ENCODE measurements at regions of chr19 and their contacts with region 1.

Region 1: DNA sequence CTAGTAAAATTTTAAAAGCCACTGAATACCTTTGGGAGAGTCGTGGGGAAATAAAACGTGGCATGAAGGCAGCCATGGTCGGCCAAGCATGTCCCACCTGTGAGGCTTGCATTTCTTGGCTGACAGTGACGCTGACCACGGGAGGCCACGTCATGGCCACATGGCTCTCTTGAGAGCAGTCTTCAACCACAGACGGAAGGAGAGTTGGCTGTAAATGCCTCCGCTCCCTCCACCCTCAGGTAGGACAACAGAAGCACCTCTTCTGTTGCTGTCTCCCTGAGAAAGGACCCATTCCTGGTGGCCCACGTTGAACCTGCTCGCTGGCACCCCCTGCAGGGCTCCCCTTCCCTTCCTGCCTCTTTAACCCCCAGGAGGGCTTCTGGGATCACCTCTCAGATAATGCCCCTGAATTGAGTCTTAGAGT is 10.6 kb upstream of the LRRC25 start:
- DNase-seq: peak; percentile 82
- H3K4me3 ChIP-seq: no peak overlapping the region
- H3K27ac ChIP-seq: no peak overlapping the region
- H3K4me1 ChIP-seq: no peaks in the 10 kb centered on the region
- H3K27me3 ChIP-seq: no peaks in the 10 kb centered on the region
- CTCF ChIP-seq: peak; percentile 61

Region 2: DNA sequence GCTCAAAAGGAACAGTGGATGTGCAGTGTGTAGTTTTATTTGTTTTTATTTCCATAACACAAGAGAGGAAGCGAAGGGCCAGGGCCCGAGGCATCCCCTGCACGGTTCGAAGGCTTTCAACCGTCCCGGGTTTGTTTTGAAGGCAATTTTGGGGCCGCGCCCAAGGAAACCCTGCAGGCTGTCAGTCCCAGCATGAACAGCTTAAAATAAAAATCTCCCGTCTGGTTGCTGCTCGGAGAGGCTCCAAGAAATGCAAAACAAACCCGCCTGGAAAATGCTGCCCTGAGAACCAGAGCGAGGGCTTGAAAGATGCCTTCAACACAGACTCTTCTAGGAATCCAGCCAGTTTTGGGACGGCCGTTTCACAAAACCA is 101.2 kb before region 1 on chr19:
- intact Hi-C with region 1: no loop called
- DNase-seq: no peak
- H3K4me3 ChIP-seq: no peak overlapping the region
- H3K27ac ChIP-seq: peak overlapping the region; percentile 55
- H3K4me1 ChIP-seq: peaks cover 9% of the 10 kb centered on the region
- H3K27me3 ChIP-seq: no peaks in the 10 kb centered on the region
- CTCF ChIP-seq: no peak

Region 3: DNA sequence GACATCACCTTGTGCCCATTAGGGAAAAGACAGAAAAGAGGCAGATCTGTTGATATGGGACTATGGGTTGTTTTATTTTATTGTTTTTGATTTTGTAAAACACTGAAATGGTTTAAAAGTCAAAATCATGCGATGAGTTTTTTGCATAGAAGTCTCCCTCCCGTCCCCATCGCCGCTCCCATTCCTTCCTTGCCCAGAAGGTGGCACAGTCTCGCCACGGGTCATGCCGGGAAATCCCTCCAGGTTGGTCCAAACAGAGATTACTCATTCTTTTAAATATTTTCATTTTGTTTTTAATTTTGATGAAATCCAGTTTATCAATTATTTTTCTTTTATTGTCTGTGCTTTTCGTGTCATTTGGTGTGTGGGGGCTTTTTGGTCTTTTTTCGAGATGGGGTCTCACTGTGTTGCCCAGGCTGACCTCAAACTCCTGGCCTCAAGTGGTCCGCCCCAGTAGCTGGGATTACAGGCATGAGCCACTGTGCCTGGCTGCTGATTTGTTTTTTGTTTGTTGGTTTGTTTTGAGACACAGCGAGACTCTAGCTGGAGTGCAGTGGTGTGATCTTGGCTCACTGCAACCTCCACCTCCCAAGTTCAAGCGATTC is 58.4 kb before region 1 on chr19:
- intact Hi-C with region 1: loop called (anchors 2 kb)
- DNase-seq: peak; percentile 78
- H3K4me3 ChIP-seq: no peak overlapping the region
- H3K27ac ChIP-seq: no peak overlapping the region
- H3K4me1 ChIP-seq: no peaks in the 10 kb centered on the region
- H3K27me3 ChIP-seq: no peaks in the 10 kb centered on the region
- CTCF ChIP-seq: peak; percentile 70

Region 4: GRCh38 chr19:18388100-18388959 is 19.7 kb before region 1 on chr19:
- intact Hi-C with region 1: loop called (anchors 2 kb)
- DNase-seq: peak; percentile 88
- H3K4me3 ChIP-seq: peak overlapping the region; percentile 43
- H3K27ac ChIP-seq: peak overlapping the region; percentile 72
- H3K4me1 ChIP-seq: no peaks in the 10 kb centered on the region
- H3K27me3 ChIP-seq: no peaks in the 10 kb centered on the region
- CTCF ChIP-seq: peak; percentile 100